ENCODE measurements at regions of chrX and their contacts with region 1.

Region 1: GRCh38 chrX:56978172-56978571 is 17.2 kb downstream of the SPIN3 start:
- DNase-seq: peak; percentile 33
- H3K4me3 Mint-ChIP-seq: no peak overlapping the region
- H3K27ac Mint-ChIP-seq: no peak overlapping the region
- H3K4me1 Mint-ChIP-seq: peaks cover 3% of the 10 kb centered on the region
- H3K27me3 Mint-ChIP-seq: no peaks in the 10 kb centered on the region

Region 2: DNA sequence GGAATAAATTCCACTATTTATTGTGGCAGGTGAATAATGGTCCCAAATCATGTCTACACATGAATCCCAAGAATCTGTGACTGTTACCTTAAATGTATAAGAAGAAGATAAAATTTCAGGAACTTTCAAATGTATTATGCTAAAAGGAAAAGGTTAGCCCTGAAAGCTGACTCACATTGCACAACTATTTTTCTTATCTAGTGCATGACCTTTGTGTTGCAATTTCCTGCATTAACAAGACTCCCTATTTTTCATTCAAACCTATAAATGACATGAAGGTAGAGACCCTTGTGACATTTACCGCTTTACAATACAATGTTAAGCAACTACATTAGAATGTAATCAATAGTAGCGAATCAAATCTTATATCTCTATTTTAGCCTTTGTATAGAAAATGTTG is 378.0 kb before region 1 on chrX:
- CTCF ChIA-PET with region 1: no interaction called
- POLR2A ChIA-PET with region 1: no interaction called
- DNase-seq: no peak
- H3K4me3 Mint-ChIP-seq: no peak overlapping the region
- H3K27ac Mint-ChIP-seq: no peak overlapping the region
- H3K4me1 Mint-ChIP-seq: peaks cover 4% of the 10 kb centered on the region
- H3K27me3 Mint-ChIP-seq: no peaks in the 10 kb centered on the region

Region 3: GRCh38 chrX:56764153-56764974 is 213.8 kb before region 1 on chrX:
- CTCF ChIA-PET with region 1: interaction called, 11 read pairs
- POLR2A ChIA-PET with region 1: no interaction called
- DNase-seq: peak; percentile 76
- H3K4me3 Mint-ChIP-seq: peak overlapping the region; percentile 65
- H3K27ac Mint-ChIP-seq: peak overlapping the region; percentile 94
- H3K4me1 Mint-ChIP-seq: peaks cover 52% of the 10 kb centered on the region
- H3K27me3 Mint-ChIP-seq: no peaks in the 10 kb centered on the region

Region 4: DNA sequence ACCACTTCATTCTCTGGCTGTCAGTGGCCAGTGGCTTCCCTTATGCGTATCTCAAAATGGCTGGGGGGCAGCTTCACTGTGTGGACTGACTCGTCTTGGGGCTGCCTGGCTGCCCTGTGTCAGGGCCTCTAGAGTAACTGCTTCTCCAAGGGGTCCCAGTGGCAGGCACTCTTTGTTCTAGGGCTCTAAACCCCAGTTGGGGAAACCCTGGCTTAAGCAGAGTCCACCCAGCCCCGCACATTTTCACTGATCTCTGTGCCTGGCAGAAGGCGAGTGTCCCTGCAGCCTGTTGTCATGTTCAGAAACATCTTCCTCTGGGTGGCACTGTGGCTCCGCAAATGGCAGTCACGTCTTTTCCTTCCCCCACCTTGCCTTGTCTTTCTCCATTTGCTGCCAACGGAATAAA is 189.5 kb before region 1 on chrX:
- CTCF ChIA-PET with region 1: interaction called, 13 read pairs
- POLR2A ChIA-PET with region 1: no interaction called
- DNase-seq: no peak
- H3K4me3 Mint-ChIP-seq: no peak overlapping the region
- H3K27ac Mint-ChIP-seq: no peak overlapping the region
- H3K4me1 Mint-ChIP-seq: peaks cover 7% of the 10 kb centered on the region
- H3K27me3 Mint-ChIP-seq: no peaks in the 10 kb centered on the region

Region 5: DNA sequence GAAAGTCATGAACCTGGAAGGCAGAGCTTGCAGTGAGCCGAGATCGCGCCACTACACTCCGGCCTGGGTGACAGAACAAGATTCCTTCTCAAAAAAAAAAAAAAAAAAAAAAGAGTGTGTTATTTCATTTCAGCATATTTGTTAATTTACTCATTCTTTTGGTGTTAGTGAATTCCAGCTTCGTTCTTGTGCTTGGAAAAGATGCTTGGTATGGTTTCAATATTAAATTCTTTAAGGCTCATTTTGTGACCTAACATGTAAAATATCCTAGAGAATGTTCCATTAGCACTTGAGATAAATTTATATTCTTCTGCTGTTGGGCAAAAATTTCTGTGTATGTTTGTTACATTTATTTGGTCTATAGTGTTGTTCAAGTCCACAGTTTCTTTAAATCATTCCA is 49.6 kb before region 1 on chrX:
- CTCF ChIA-PET with region 1: no interaction called
- POLR2A ChIA-PET with region 1: no interaction called
- DNase-seq: no peak
- H3K4me3 Mint-ChIP-seq: no peak overlapping the region
- H3K27ac Mint-ChIP-seq: no peak overlapping the region
- H3K4me1 Mint-ChIP-seq: no peaks in the 10 kb centered on the region
- H3K27me3 Mint-ChIP-seq: no peaks in the 10 kb centered on the region